ENCODE measurements at regions of chr2 and their contacts with region 1.

Region 1: DNA sequence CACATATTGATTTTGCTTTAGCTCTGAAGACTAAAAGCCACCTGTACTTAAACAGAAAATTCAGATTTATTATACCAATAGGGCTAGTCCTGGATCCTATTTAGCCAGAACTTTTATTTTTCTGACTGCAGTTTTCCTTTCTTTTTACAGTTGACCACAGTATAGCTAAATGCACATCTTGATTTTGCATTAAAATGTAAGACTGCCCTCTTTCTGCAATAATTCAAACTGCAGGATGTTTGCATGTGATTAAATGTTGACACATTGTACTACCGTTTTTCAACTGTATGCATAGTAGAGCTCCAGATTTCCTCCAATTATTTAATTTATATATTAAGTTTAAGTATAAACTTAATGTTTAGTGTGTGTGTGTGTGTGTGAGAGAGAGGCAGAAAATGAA is 1262.9 kb downstream of the SUCLG1 start:
- DNase-seq: peak; percentile 12
- ATAC-seq: peak; percentile 58; the same call in 1 of the 3 replicates
- H3K4me3 ChIP-seq: no peak overlapping the region
- H3K27ac ChIP-seq: no peak overlapping the region
- H3K4me1 ChIP-seq: no peaks in the 10 kb centered on the region
- H3K27me3 ChIP-seq: no peaks in the 10 kb centered on the region
- CTCF ChIP-seq: peak; percentile 58
- EP300 ChIP-seq: no peak
- POLR2A ChIP-seq: no peak
- RAD21 ChIP-seq: no peak

Region 2: GRCh38 chr2:82344670-82345069 is 851.6 kb before region 1 on chr2:
- CTCF ChIA-PET with region 1: no interaction called
- POLR2A ChIA-PET with region 1: no interaction called
- in situ Hi-C with region 1: no loop called
- intact Hi-C with region 1: loop called (anchors 5 kb)
- DNase-seq: peak; percentile 21
- ATAC-seq: no peak
- H3K4me3 ChIP-seq: no peak overlapping the region
- H3K27ac ChIP-seq: no peak overlapping the region
- H3K4me1 ChIP-seq: no peaks in the 10 kb centered on the region
- H3K27me3 ChIP-seq: no peaks in the 10 kb centered on the region; a peak in 1 of 5 replicates
- CTCF ChIP-seq: 0 out of 2 replicates have a peak, but pooled peaks have one; percentile 8
- EP300 ChIP-seq: no peak
- POLR2A ChIP-seq: no peak
- RAD21 ChIP-seq: no peak

Region 3: DNA sequence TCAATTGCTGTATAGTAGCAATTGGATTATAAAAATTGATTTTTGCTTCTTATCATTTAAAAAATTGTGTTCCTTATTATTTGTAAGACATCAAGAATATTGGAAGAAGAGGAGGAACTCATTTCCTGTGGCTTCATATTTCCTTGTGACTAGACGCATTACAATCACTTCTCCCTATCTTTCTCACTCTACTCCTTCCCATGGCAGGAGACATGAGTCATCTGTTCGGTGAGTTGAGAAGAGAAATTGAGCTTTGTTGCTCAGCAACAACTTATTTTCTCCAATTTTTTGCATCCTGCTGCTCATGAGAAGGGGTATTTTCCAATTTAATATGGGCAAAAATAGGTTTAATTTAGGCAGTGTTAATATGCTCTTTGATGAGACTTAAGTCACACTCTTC is 521.0 kb before region 1 on chr2:
- CTCF ChIA-PET with region 1: no interaction called
- POLR2A ChIA-PET with region 1: no interaction called
- in situ Hi-C with region 1: no loop called
- intact Hi-C with region 1: no loop called
- DNase-seq: no peak
- ATAC-seq: no peak
- H3K4me3 ChIP-seq: no peak overlapping the region
- H3K27ac ChIP-seq: no peak overlapping the region
- H3K4me1 ChIP-seq: no peaks in the 10 kb centered on the region
- H3K27me3 ChIP-seq: no peaks in the 10 kb centered on the region
- CTCF ChIP-seq: no peak
- EP300 ChIP-seq: no peak
- POLR2A ChIP-seq: no peak
- RAD21 ChIP-seq: no peak

Region 4: GRCh38 chr2:83014462-83014861 is 181.8 kb before region 1 on chr2:
- CTCF ChIA-PET with region 1: no interaction called
- POLR2A ChIA-PET with region 1: no interaction called
- in situ Hi-C with region 1: no loop called
- intact Hi-C with region 1: loop called (anchors 5 kb)
- DNase-seq: no peak
- ATAC-seq: no peak
- H3K4me3 ChIP-seq: no peak overlapping the region
- H3K27ac ChIP-seq: no peak overlapping the region
- H3K4me1 ChIP-seq: peaks cover 6% of the 10 kb centered on the region; the same call in 1 of the 2 replicates
- H3K27me3 ChIP-seq: no peaks in the 10 kb centered on the region
- CTCF ChIP-seq: no peak
- EP300 ChIP-seq: no peak
- POLR2A ChIP-seq: no peak
- RAD21 ChIP-seq: no peak

Region 5: GRCh38 chr2:83069724-83070123 is 126.5 kb before region 1 on chr2:
- CTCF ChIA-PET with region 1: no interaction called
- POLR2A ChIA-PET with region 1: no interaction called
- in situ Hi-C with region 1: no loop called
- intact Hi-C with region 1: loop called (anchors 5 kb)
- DNase-seq: no peak
- ATAC-seq: no peak
- H3K4me3 ChIP-seq: no peak overlapping the region
- H3K27ac ChIP-seq: no peak overlapping the region
- H3K4me1 ChIP-seq: peaks cover 58% of the 10 kb centered on the region
- H3K27me3 ChIP-seq: no peaks in the 10 kb centered on the region
- CTCF ChIP-seq: no peak
- EP300 ChIP-seq: no peak
- POLR2A ChIP-seq: no peak
- RAD21 ChIP-seq: no peak

Measured in HepG2 (cell line).